A549 (cell line): ENCODE measurements at regions of chr7 and their contacts with region 1.

Region 1: GRCh38 chr7:17298207-17298839 is at the start of gene AHR:
- DNase-seq: peak; percentile 59 to 97
- ATAC-seq: peak; percentile 91 to 92
- H3K4me3 ChIP-seq: peak within 1 kb of the TSS; percentile 84
- H3K27ac ChIP-seq: peak within 1 kb of the TSS; percentile 90 to 95
- H3K4me1 ChIP-seq: peaks cover 28% of the 10 kb centered on the region
- CTCF ChIP-seq: no peak
- EP300 ChIP-seq: no peak
- POLR2A ChIP-seq: peak; percentile 95
- RAD21 ChIP-seq: peak; percentile 3 to 26; a peak in 1 of 5 replicates
- polyA plus RNA-seq, gene AHR: 14.3 and 50.1 TPM in 2 replicates

Region 2: GRCh38 chr7:16982640-16983350 is 315.5 kb before region 1 on chr7:
- CTCF ChIA-PET with region 1: interaction called, 17 read pairs
- POLR2A ChIA-PET with region 1: no interaction called
- DNase-seq: peak in 1 of 2 experiments; percentile 60
- ATAC-seq: 0 out of 6 replicates have a peak, but pooled peaks of 1 of the 2 experiments have one; percentile 27
- H3K4me3 ChIP-seq: no peak overlapping the region
- H3K27ac ChIP-seq: peak overlapping the region; percentile 43 to 49
- H3K4me1 ChIP-seq: peaks cover 29% of the 10 kb centered on the region
- CTCF ChIP-seq: peak; percentile 97
- EP300 ChIP-seq: no peak
- POLR2A ChIP-seq: no peak
- RAD21 ChIP-seq: peak; percentile 96

Region 3: GRCh38 chr7:17130281-17131059 is 167.9 kb before region 1 on chr7:
- CTCF ChIA-PET with region 1: no interaction called
- POLR2A ChIA-PET with region 1: interaction called, 15 read pairs
- DNase-seq: peak; percentile 84 to 95
- ATAC-seq: peak; percentile 95 to 96
- H3K4me3 ChIP-seq: peak overlapping the region; percentile 20; the same call in 2 of the 3 replicates
- H3K27ac ChIP-seq: peak overlapping the region; percentile 71 to 79
- H3K4me1 ChIP-seq: peaks cover 31% of the 10 kb centered on the region
- CTCF ChIP-seq: no peak
- EP300 ChIP-seq: peak; percentile 79 to 95; a peak in 4 of 5 replicates
- POLR2A ChIP-seq: no peak
- RAD21 ChIP-seq: peak; percentile 17 to 63; a peak in 4 of 5 replicates

Region 4: GRCh38 chr7:17185690-17186070 is 112.6 kb before region 1 on chr7:
- CTCF ChIA-PET with region 1: no interaction called
- POLR2A ChIA-PET with region 1: no interaction called
- DNase-seq: peak in 1 of 2 experiments; percentile 56
- ATAC-seq: peak; percentile 73 to 81
- H3K4me3 ChIP-seq: no peak overlapping the region
- H3K27ac ChIP-seq: peak overlapping the region; percentile 29 to 66; a peak in 5 of 6 replicates
- H3K4me1 ChIP-seq: peaks cover 20% of the 10 kb centered on the region
- CTCF ChIP-seq: no peak
- EP300 ChIP-seq: no peak
- POLR2A ChIP-seq: no peak
- RAD21 ChIP-seq: no peak

Region 5: GRCh38 chr7:17275749-17276671 is 22.3 kb before region 1 on chr7:
- CTCF ChIA-PET with region 1: interaction called, 7 read pairs
- POLR2A ChIA-PET with region 1: interaction called, 20 read pairs
- DNase-seq: peak in 1 of 2 experiments; percentile 77
- ATAC-seq: peak; percentile 97 to 99
- H3K4me3 ChIP-seq: no peak overlapping the region
- H3K27ac ChIP-seq: peak overlapping the region; percentile 27 to 65; a peak in 5 of 6 replicates
- H3K4me1 ChIP-seq: peaks cover 20% of the 10 kb centered on the region
- CTCF ChIP-seq: no peak
- EP300 ChIP-seq: peak; percentile 57 to 73; a peak in 2 of 5 replicates
- POLR2A ChIP-seq: no peak
- RAD21 ChIP-seq: peak in 1 of 2 experiments; percentile 3; a peak in 3 of 5 replicates

Region 6: GRCh38 chr7:17339139-17339538 is 40.8 kb after region 1 on chr7:
- CTCF ChIA-PET with region 1: no interaction called
- POLR2A ChIA-PET with region 1: no interaction called
- DNase-seq: no peak
- ATAC-seq: no peak
- H3K4me3 ChIP-seq: no peak overlapping the region
- H3K27ac ChIP-seq: no peak overlapping the region
- H3K4me1 ChIP-seq: no peaks in the 10 kb centered on the region
- CTCF ChIP-seq: no peak
- EP300 ChIP-seq: no peak
- POLR2A ChIP-seq: no peak
- RAD21 ChIP-seq: no peak

Region 7: GRCh38 chr7:17392846-17393245 is 94.5 kb after region 1 on chr7:
- CTCF ChIA-PET with region 1: no interaction called
- POLR2A ChIA-PET with region 1: no interaction called
- DNase-seq: no peak
- ATAC-seq: no peak
- H3K4me3 ChIP-seq: no peak overlapping the region
- H3K27ac ChIP-seq: no peak overlapping the region
- H3K4me1 ChIP-seq: no peaks in the 10 kb centered on the region
- CTCF ChIP-seq: no peak
- EP300 ChIP-seq: no peak
- POLR2A ChIP-seq: no peak
- RAD21 ChIP-seq: no peak